Calu3 (cell line): ENCODE measurements at regions of chr12 and their contacts with region 1.

Region 1: GRCh38 chr12:98373025-98373554 is 142.3 kb upstream of the TMPO start:
- DNase-seq: peak; percentile 47
- H3K4me3 Mint-ChIP-seq: no peak overlapping the region
- H3K27ac Mint-ChIP-seq: no peak overlapping the region
- H3K4me1 Mint-ChIP-seq: peaks cover 9% of the 10 kb centered on the region
- H3K27me3 Mint-ChIP-seq: peaks cover 52% of the 10 kb centered on the region
- CTCF ChIP-seq: peak; percentile 48

Region 2: GRCh38 chr12:96578526-96579125 is 1794.5 kb before region 1 on chr12:
- CTCF ChIA-PET with region 1: no interaction called
- intact Hi-C with region 1: loop called (anchors 2 kb)
- DNase-seq: peak; percentile 20
- H3K4me3 Mint-ChIP-seq: no peak overlapping the region
- H3K27ac Mint-ChIP-seq: no peak overlapping the region
- H3K4me1 Mint-ChIP-seq: no peaks in the 10 kb centered on the region
- H3K27me3 Mint-ChIP-seq: no peaks in the 10 kb centered on the region
- CTCF ChIP-seq: peak; percentile 34

Region 3: GRCh38 chr12:97148941-97149559 is 1224.0 kb before region 1 on chr12:
- CTCF ChIA-PET with region 1: no interaction called
- intact Hi-C with region 1: loop called (anchors 1 kb)
- DNase-seq: peak; percentile 87
- H3K4me3 Mint-ChIP-seq: no peak overlapping the region
- H3K27ac Mint-ChIP-seq: no peak overlapping the region
- H3K4me1 Mint-ChIP-seq: no peaks in the 10 kb centered on the region
- H3K27me3 Mint-ChIP-seq: peaks cover 22% of the 10 kb centered on the region
- CTCF ChIP-seq: peak; percentile 81

Region 4: GRCh38 chr12:97308576-97309198 is 1064.4 kb before region 1 on chr12:
- CTCF ChIA-PET with region 1: no interaction called
- intact Hi-C with region 1: loop called (anchors 10 kb)
- DNase-seq: peak; percentile 35
- H3K4me3 Mint-ChIP-seq: no peak overlapping the region
- H3K27ac Mint-ChIP-seq: no peak overlapping the region
- H3K4me1 Mint-ChIP-seq: peaks cover 8% of the 10 kb centered on the region
- H3K27me3 Mint-ChIP-seq: peaks cover 17% of the 10 kb centered on the region
- CTCF ChIP-seq: peak; percentile 64

Region 5: DNA sequence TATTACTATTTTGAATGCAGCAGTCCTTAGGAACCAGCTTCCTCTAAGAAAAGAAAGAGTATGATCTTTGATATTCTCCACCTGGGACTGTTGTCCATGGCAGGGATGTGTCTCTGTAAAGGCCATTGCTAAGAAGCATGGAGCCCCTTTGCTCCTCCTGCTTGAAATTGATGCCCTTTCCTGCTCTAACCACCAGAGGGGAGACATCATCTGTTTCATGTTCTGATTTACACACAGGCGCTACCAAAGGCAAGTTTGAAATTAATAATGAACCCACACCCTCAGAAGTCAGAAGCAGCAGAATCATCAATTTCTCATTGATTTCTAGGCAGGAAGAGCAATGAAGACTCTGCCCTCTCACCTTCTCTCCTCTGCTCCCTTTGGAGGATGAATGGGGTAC is 656.7 kb before region 1 on chr12:
- CTCF ChIA-PET with region 1: no interaction called
- intact Hi-C with region 1: loop called (anchors 10 kb)
- DNase-seq: peak; percentile 30
- H3K4me3 Mint-ChIP-seq: no peak overlapping the region
- H3K27ac Mint-ChIP-seq: no peak overlapping the region
- H3K4me1 Mint-ChIP-seq: peaks cover 44% of the 10 kb centered on the region
- H3K27me3 Mint-ChIP-seq: no peaks in the 10 kb centered on the region
- CTCF ChIP-seq: peak; percentile 56

Region 6: DNA sequence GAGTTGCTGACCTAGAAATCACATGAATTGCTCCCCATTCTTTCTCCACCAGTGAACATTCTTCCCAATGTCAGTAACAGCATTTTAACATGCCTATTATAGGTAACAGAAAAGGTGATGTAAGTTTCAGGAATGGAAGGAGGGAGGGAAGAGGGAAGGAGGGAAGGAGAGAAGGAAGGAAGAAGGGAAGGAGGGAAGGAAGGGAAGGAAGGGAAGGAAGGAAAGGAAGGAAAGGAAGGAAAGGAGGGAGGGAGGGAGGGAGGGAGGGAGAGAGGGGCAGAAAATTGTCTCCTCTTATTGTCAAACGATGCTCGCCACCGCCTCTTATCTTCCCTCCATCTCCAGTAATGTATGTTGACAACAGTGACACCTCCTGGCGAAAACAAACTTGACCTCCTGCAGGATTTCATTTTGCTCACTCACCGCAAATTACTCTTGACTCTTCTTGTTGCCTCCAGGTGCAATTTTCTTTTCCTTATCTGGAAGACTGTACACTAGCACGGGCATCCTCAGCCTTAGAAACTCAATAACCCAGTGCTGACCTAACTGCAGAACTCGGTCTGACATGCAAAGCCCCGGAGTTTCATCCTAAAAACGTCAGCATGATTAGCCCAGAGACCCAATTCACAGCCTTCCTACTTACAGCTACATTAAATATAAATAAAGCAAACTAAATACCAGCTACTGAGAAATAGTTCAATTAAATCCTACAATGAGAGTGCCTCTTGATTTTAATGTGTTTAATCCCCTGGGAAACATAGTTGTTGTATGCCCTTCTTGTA is 370.2 kb before region 1 on chr12:
- CTCF ChIA-PET with region 1: no interaction called
- intact Hi-C with region 1: loop called (anchors 5 kb)
- DNase-seq: peak; percentile 72
- H3K4me3 Mint-ChIP-seq: no peak overlapping the region
- H3K27ac Mint-ChIP-seq: no peak overlapping the region
- H3K4me1 Mint-ChIP-seq: peaks cover 9% of the 10 kb centered on the region
- H3K27me3 Mint-ChIP-seq: no peaks in the 10 kb centered on the region
- CTCF ChIP-seq: peak; percentile 61

Region 7: DNA sequence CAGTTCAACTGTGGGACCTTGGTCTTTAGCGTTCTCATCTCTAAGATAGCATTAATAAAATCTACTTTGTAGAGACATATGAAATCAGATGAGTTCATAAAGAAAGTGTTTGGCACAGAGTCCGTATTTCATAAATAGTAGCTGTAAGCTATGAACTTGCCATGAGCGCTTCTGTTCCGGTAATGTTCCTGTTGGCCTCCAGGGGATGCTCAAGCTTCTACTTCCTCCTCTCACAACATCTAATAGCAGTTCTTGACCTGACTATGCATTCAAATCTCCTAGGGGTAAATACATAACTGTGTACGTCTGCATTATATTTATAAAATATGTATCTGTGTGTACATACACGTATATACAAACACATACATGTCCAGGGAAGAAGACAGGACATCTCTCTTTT is 145.9 kb before region 1 on chr12:
- CTCF ChIA-PET with region 1: no interaction called
- intact Hi-C with region 1: loop called (anchors 10 kb)
- DNase-seq: no peak
- H3K4me3 Mint-ChIP-seq: no peak overlapping the region
- H3K27ac Mint-ChIP-seq: no peak overlapping the region
- H3K4me1 Mint-ChIP-seq: peaks cover 9% of the 10 kb centered on the region
- H3K27me3 Mint-ChIP-seq: no peaks in the 10 kb centered on the region
- CTCF ChIP-seq: no peak